ENCODE measurements at regions of chr12 and their contacts with region 1.

Region 1: DNA sequence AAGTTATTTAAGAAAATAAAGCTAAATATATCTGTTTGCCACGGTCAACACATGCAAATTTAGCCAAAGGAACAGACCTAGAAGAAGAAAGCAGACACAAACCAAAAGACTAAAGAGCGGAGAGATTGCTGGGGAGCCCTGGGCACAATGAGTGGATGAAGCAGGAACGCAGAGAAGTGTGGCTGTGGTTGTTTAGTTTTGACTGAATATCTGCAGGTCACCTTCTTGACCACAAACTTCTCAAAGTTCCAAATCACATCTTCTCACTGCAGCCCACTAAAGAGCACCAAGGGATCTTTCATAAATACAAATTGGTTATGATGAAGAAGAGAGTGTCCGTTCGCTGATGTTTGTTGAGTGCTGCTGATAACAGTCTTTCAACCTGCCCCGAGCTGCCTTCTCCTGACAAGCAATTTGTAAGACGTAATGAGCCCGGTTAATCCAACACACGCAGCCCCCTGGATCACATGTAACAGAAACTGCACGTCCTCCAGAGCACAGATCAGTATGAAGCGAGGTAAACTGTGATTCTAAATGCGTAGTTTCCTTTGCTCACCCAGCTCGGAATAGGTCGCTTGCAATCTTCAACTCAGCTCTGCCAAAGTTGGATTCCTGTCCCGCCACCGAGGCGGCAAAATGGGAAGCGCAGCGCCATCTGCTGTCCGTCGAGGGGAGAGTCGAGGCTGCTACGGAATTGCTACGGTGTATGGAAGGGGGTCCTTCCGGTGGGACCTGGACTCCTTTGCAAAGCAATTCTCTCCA is 120.8 kb downstream of the GXYLT1 start:
- DNase-seq: peak; percentile 60 to 78 (median 74)
- ATAC-seq: peak; percentile 80
- H3K4me3 ChIP-seq: no peak overlapping the region
- H3K4me1 ChIP-seq: peaks cover 7% of the 10 kb centered on the region
- CTCF ChIP-seq: peak; percentile 87

Region 2: GRCh38 chr12:40946612-40947194 is 1077.2 kb before region 1 on chr12:
- intact Hi-C with region 1: loop called (anchors 10 kb)
- DNase-seq: no peak
- ATAC-seq: no peak
- H3K4me3 ChIP-seq: no peak overlapping the region
- H3K4me1 ChIP-seq: no peaks in the 10 kb centered on the region
- CTCF ChIP-seq: no peak

Region 3: GRCh38 chr12:41277116-41277945 is 746.6 kb before region 1 on chr12:
- intact Hi-C with region 1: loop called in 1 of 2 experiments (anchors 10 kb)
- DNase-seq: peak in 1 of 3 donors; percentile 16
- ATAC-seq: no peak
- H3K4me3 ChIP-seq: no peak overlapping the region
- H3K4me1 ChIP-seq: no peaks in the 10 kb centered on the region
- CTCF ChIP-seq: no peak

Region 4: DNA sequence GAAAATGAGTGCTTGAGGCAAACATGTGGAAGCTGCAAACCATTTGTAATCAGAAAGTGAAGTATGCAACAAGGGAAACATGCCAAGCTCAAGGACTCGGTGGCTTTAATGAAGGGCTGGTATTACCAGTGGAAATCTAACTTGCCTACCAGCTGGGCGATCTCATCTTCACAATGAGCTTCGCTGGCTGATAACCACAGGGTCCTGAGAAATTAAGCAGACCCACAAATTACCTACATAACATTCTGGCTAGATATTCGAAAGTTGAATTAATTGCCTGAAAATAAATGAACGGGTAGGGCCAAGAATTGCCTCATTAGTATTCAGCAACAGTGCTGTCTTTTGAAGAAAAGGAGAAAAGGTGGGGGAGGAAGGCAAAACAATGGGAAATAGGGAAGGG is 396.4 kb before region 1 on chr12:
- intact Hi-C with region 1: no loop called
- DNase-seq: no peak
- ATAC-seq: no peak
- H3K4me3 ChIP-seq: no peak overlapping the region
- H3K4me1 ChIP-seq: no peaks in the 10 kb centered on the region
- CTCF ChIP-seq: no peak

Measured in mucosa of descending colon (tissue), 3 donors.